ENCODE measurements at regions of chr3 and their contacts with region 1.

Region 1: DNA sequence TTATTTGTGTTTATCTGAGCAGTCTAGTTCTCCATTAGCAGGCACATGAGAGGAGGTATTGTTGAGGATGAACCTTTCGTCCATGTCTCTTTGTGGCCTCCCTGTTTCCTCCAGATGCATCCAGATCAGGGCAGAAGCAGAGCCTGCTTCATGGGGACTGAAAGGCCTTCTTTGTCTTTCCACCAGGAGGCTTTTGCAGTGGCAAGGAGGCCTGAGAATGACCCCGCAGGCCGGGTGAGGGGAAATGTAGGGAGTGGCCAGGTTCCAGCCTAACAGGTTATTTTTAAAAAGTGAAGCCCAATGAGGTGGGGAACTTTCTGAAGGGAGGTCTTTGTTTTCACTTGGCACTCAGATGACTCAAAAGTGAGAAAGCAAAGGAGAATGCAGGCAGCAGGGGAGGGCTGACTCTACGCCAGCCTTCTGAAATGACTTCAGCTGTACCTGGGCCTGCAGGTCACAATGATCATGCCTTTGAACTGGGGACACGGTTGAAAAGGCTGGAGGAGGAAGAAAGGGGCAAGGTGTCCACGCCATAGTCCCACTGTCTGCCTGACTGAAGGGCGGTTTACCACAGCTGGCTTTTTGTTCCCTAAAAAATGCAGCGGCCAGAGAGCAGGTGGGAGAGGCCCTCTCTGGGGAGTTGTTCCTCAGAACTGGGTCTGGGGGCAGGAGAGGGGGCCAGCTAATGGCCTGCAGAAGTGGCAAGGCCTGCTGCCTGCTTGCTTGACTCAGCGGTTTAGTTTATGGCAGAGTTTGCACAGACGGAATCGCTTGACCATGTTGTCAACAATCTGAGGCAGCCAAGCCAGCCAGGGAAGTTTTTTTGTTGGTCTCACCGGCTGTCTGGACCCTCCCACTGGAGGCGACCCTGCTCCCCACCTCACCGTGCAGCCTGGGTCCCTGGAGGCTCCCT is 28.7 kb downstream of the CMTM7 start:
- DNase-seq: peak; percentile 80
- ATAC-seq: peak; percentile 77
- H3K4me3 ChIP-seq: peak overlapping the region in 3 of 5 experiments; percentile 2 to 38 (median 11)
- H3K4me3 Mint-ChIP-seq: peak overlapping the region; percentile 84
- H3K27ac ChIP-seq: peak overlapping the region; percentile 79 to 86
- H3K27ac Mint-ChIP-seq: peak overlapping the region; percentile 97
- H3K4me1 ChIP-seq: peaks cover 67 to 73% of the 10 kb centered on the region in 2 donors
- H3K4me1 Mint-ChIP-seq: peaks cover 84% of the 10 kb centered on the region
- H3K27me3 ChIP-seq: no peaks in the 10 kb centered on the region
- H3K27me3 Mint-ChIP-seq: no peaks in the 10 kb centered on the region
- CTCF ChIP-seq: no peak

Region 2: DNA sequence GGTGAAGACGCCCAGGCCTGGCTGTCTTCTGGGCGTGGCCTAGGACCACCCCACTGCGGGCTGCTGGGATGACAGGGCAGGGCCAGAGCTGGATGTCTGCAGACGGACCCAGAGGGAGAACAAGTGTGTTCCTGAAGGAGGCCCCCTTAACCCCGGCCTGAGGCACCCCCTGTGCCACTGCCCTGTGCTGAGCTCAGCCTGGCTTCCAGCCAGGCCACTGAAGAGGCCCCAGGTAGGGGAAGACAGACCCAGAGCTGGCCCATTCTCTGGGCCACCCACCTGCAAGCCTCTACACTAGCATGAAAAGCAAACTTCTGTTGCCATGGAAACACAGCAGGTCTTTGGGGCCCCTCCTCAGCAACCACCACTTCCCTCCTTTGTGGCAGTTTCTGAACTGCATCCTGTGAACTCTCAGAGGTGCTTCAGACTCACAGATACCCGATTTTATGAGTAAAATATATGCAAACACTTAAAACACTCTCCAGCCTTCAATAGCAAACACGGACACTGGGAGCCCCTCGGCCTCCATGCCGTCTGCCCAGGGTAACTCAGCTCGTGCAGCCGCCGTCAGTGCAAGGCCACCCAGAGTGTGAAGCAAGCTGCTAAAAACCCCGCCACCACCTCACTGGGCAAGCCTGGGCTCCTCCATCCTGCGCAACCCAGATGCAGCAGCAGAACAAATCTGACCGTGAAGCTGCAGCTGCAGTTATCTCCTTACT is 39.8 kb after region 1 on chr3:
- CTCF ChIA-PET with region 1: interaction called, 5 read pairs
- POLR2A ChIA-PET with region 1: interaction called, 3 read pairs
- intact Hi-C with region 1: loop called (anchors 5 kb)
- DNase-seq: peak; percentile 94
- ATAC-seq: peak; percentile 73
- H3K4me3 ChIP-seq: peak overlapping the region in 3 of 5 experiments; percentile 29 to 39 (median 32)
- H3K4me3 Mint-ChIP-seq: peak overlapping the region; percentile 82
- H3K27ac ChIP-seq: peak overlapping the region; percentile 85 to 94
- H3K27ac Mint-ChIP-seq: peak overlapping the region; percentile 95
- H3K4me1 ChIP-seq: peaks cover 55 to 69% of the 10 kb centered on the region in 2 donors
- H3K4me1 Mint-ChIP-seq: peaks cover 48% of the 10 kb centered on the region
- H3K27me3 ChIP-seq: no peaks in the 10 kb centered on the region
- H3K27me3 Mint-ChIP-seq: no peaks in the 10 kb centered on the region
- CTCF ChIP-seq: no peak